BJ (cell line): ENCODE measurements at regions of chr1 and their contacts with region 1.

Region 1: GRCh38 chr1:226827968-226828513 is 42.4 kb upstream of the PSEN2 start:
- DNase-seq: no peak
- H3K4me3 ChIP-seq: no peak overlapping the region
- H3K27me3 ChIP-seq: 0 out of 2 replicates have a peak, but pooled peaks cover 1% of the 10 kb centered on the region
- CTCF ChIP-seq: peak; percentile 92

Region 2: GRCh38 chr1:226626577-226626956 is 201.5 kb before region 1 on chr1:
- CTCF ChIA-PET with region 1: interaction called, 126 read pairs
- POLR2A ChIA-PET with region 1: no interaction called
- DNase-seq: no peak
- H3K4me3 ChIP-seq: no peak overlapping the region
- H3K27me3 ChIP-seq: peaks cover 1% of the 10 kb centered on the region; the same call in 1 of the 2 replicates
- CTCF ChIP-seq: peak; percentile 97

Region 3: GRCh38 chr1:226634166-226634588 is 193.9 kb before region 1 on chr1:
- CTCF ChIA-PET with region 1: interaction called, 126 read pairs
- POLR2A ChIA-PET with region 1: no interaction called
- DNase-seq: no peak
- H3K4me3 ChIP-seq: no peak overlapping the region
- H3K27me3 ChIP-seq: peaks cover 1% of the 10 kb centered on the region; the same call in 1 of the 2 replicates
- CTCF ChIP-seq: peak; percentile 95

Region 4: DNA sequence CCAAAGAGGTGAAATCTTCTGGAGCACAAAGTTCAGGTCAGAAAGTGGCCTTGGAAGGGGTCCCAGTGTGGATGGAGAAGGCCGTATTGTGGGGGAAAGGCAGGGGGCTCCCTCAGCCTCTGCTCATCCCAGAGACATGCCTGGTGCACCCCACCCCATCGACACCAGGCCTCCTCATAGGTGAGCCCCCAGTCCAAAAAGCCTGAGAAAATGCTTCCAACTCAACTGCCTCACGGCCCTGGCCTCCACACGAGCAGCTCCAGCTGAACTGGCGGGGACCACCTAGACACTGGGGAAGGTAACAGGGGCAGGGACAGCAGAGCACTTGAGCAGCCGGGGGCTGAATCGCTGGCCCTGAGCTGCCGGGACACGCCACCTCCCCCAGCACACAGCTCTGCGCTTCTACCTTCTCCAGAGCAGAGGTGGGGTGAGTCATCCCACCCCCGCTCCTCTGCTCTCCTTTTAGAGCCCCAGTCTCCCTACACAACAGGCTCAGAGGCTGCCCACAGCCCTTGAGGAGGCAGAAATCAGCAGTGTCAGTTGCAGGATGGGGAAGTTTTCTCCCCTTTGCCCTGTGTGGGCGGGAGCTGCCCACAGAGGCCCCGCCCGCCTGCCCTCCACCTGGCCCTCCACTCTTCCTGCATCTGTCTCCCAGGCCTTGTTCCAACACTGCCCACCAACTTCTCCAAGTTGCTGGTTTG is 185.0 kb before region 1 on chr1:
- CTCF ChIA-PET with region 1: interaction called, 16 read pairs
- POLR2A ChIA-PET with region 1: no interaction called
- DNase-seq: no peak
- H3K4me3 ChIP-seq: no peak overlapping the region
- H3K27me3 ChIP-seq: no peaks in the 10 kb centered on the region
- CTCF ChIP-seq: no peak

Region 5: GRCh38 chr1:226653311-226653921 is 174.6 kb before region 1 on chr1:
- CTCF ChIA-PET with region 1: interaction called, 11 read pairs
- POLR2A ChIA-PET with region 1: no interaction called
- DNase-seq: no peak
- H3K4me3 ChIP-seq: no peak overlapping the region
- H3K27me3 ChIP-seq: no peaks in the 10 kb centered on the region
- CTCF ChIP-seq: no peak

Region 6: DNA sequence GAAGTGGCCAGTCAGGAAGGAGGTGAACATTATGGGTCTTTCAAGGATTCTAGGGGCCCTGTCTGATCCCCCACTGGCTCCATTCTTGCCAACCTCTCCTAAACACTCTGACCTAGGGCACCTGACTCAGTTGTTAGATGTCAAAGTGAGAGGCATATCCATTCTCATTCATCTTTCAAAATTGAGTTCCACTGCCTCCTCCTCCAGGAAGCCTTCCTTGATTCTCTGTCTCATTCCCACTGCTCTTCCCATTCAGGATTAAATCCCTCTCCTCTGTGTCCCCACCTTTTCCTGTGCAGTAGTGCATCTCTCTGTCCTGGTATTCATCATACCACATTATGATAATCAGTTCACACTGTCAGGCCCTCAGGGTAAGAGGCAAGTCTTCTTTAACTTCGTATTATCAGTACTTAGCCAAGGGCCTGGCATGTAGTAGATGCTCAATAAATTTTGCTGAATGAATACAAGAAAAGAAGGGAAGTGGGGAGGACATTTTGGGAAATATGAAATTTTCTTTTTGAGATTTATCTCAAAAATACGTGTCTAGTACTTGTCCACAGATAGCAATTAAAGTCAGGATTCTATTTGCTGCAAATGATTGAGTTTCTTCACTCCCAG is 27.2 kb before region 1 on chr1:
- CTCF ChIA-PET with region 1: no interaction called
- POLR2A ChIA-PET with region 1: no interaction called
- DNase-seq: no peak
- H3K4me3 ChIP-seq: no peak overlapping the region
- H3K27me3 ChIP-seq: peaks cover 5% of the 10 kb centered on the region
- CTCF ChIP-seq: no peak

Region 7: DNA sequence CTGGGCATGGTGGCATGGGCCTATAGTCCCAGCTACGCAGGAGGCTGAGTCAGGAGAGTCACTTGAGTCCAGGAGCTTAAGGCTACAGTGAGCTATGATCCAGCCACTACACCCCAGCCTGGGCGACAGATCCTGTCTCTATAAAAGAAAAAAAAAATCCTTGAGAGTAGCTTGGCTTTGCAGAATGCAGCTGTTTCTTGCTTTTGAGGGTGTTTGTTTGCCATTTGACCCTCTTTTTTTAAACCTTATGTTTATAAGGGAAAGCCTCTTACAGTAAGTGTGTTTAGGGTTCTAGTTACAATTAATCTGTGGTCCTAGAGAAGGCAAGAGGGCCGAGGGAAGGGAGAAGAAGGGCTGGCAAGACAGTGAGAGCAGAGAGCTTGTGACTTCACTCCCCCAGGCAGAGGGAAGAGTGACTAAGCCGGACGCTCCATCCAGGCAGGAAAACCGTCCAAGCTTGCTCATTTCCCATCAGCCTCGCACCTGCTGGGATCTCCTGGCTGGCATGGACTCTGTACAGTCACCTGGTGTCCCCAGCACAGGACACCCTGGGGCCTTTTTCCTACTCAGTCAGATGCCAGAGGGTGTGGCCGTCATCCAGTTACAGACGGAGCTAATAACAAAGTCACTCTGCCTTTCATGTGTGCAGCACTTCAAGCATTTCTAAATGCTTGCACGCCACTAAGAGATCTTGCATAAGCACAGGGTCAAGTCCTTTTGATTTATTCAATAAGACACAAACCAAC is 13.1 kb before region 1 on chr1:
- CTCF ChIA-PET with region 1: interaction called, 23 read pairs
- POLR2A ChIA-PET with region 1: no interaction called
- DNase-seq: peak; percentile 78
- H3K4me3 ChIP-seq: no peak overlapping the region
- H3K27me3 ChIP-seq: no peaks in the 10 kb centered on the region
- CTCF ChIP-seq: no peak

Region 8: DNA sequence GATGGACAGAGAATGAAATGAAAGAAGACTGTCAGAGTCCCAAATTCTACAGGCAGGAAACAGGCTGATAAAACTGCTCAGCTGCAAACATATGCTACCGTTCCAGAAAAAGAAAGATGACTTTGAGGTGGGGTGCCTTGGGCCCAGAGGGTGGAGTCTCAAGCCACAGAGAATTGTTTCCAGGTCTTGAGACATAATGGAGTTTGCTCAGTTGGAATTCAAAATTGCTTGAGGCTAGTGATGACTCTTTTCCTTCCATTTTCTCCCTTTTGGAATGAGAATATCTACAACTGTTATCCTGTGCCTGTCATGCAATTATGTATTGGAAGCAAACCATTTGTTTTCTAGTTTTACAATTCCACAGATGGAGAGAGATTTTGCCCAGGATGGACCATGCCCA is 18.8 kb after region 1 on chr1:
- CTCF ChIA-PET with region 1: no interaction called
- POLR2A ChIA-PET with region 1: no interaction called
- DNase-seq: peak; percentile 43
- H3K4me3 ChIP-seq: no peak overlapping the region
- H3K27me3 ChIP-seq: no peaks in the 10 kb centered on the region; the same call in 1 of the 2 replicates
- CTCF ChIP-seq: no peak